Caco-2 (cell line): ENCODE measurements at regions of chr1 and their contacts with region 1.

Region 1: DNA sequence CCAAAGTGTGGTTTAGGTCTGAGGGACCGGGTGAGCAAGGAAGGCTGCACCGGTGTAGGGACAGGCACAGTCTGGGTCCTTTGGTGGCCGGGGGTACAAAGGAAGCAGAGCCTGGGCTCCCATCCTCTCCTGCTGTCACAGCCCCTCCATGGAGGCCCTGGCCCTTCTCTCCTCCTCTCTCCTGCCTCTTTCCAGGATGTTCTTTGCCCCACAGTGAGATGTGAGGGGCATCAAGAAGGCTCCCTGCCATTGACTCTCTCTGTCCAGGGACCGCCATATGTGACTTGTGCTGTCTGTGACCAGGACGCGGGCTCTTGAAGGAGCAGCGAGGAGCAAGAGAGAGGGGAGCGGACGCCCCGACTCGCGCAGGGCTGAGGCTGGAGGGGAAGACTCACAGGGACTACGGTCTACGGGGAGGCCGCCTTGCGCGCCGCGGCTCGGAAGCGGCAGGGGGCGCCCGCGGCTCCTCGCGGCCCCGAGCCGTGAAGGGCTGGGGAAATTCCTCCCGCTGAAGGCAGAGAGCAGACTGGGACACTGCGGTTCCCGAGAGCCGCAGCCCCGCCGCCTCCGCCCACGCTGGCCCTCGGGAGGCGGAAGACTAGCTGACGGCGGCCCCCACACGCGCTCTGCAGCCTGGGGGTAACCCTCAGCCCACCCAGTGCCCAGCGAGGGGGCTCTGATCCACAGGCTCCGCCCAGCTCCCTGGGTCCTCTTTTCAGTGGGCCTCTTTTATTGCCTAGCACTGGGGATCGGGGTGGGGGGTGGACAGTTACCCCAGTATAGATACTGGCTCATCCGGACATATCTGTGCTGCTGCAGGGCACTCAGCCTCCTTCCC is 40.8 kb downstream of the MAB21L3 start:
- DNase-seq: peak; percentile 68 to 80
- H3K4me3 ChIP-seq: peak overlapping the region; percentile 38
- H3K4me3 Mint-ChIP-seq: peak overlapping the region; percentile 66
- H3K27ac Mint-ChIP-seq: peak overlapping the region; percentile 75
- H3K4me1 ChIP-seq: peaks cover 40% of the 10 kb centered on the region
- H3K4me1 Mint-ChIP-seq: peaks cover 9% of the 10 kb centered on the region
- H3K27me3 ChIP-seq: no peaks in the 10 kb centered on the region
- H3K27me3 Mint-ChIP-seq: no peaks in the 10 kb centered on the region
- CTCF ChIP-seq: peak; percentile 46 to 79

Region 2: DNA sequence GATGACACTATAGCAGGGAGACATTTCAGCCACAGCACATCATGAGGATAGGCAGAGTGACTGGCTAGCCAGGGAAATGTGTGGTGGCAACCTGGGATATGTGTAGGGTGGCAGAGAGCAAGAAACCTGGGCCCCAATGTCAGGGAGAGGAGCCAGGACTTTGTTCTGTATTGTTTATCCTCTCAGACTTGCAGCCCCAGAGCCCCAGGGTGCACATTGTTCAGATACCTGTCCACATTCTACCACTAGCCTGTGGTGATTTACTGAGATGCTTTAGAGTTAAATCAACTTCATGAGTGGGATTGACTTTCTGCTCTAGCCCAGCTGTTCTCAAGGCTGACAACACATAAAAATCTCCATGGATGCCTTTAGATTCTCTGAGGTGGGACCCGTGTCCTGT is 20.7 kb after region 1 on chr1:
- CTCF ChIA-PET with region 1: no interaction called
- POLR2A ChIA-PET with region 1: no interaction called
- intact Hi-C with region 1: loop called (anchors 1 kb)
- DNase-seq: peak; percentile 52 to 73
- H3K4me3 ChIP-seq: no peak overlapping the region
- H3K4me3 Mint-ChIP-seq: peak overlapping the region; percentile 27
- H3K27ac Mint-ChIP-seq: no peak overlapping the region
- H3K4me1 ChIP-seq: peaks cover 48% of the 10 kb centered on the region
- H3K4me1 Mint-ChIP-seq: peaks cover 15% of the 10 kb centered on the region
- H3K27me3 ChIP-seq: no peaks in the 10 kb centered on the region
- H3K27me3 Mint-ChIP-seq: no peaks in the 10 kb centered on the region
- CTCF ChIP-seq: no peak

Region 3: DNA sequence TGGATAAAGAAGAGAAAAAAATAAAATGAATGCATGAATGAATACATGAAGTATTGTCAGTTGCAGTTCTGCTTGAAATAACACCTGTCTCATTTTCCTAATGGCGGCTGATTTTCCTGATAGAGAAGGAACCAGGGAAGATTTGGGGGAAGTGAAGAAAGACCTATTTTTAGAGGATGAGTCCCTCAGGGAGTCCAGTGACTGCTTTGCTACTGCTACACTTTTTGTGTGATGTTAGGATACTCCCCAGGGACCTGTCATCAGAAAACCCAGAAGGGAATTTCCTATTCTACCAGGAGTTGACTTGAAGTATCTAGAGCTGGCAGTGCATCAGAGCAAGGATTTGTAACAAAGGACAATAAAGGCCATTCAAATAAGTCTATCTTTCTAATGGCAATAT is 74.1 kb after region 1 on chr1:
- CTCF ChIA-PET with region 1: no interaction called
- POLR2A ChIA-PET with region 1: no interaction called
- intact Hi-C with region 1: loop called (anchors 10 kb)
- DNase-seq: no peak
- H3K4me3 ChIP-seq: no peak overlapping the region
- H3K4me3 Mint-ChIP-seq: no peak overlapping the region
- H3K27ac Mint-ChIP-seq: no peak overlapping the region
- H3K4me1 ChIP-seq: no peaks in the 10 kb centered on the region
- H3K4me1 Mint-ChIP-seq: no peaks in the 10 kb centered on the region
- H3K27me3 ChIP-seq: no peaks in the 10 kb centered on the region
- H3K27me3 Mint-ChIP-seq: no peaks in the 10 kb centered on the region
- CTCF ChIP-seq: no peak

Region 4: GRCh38 chr1:116239620-116240310 is 87.8 kb after region 1 on chr1:
- CTCF ChIA-PET with region 1: no interaction called
- POLR2A ChIA-PET with region 1: no interaction called
- intact Hi-C with region 1: no loop called
- DNase-seq: peak in 1 of 2 experiments; percentile 4
- H3K4me3 ChIP-seq: no peak overlapping the region
- H3K4me3 Mint-ChIP-seq: no peak overlapping the region
- H3K27ac Mint-ChIP-seq: peak overlapping the region; percentile 61
- H3K4me1 ChIP-seq: no peaks in the 10 kb centered on the region
- H3K4me1 Mint-ChIP-seq: peaks cover 8% of the 10 kb centered on the region
- H3K27me3 ChIP-seq: no peaks in the 10 kb centered on the region
- H3K27me3 Mint-ChIP-seq: no peaks in the 10 kb centered on the region
- CTCF ChIP-seq: no peak

Region 5: DNA sequence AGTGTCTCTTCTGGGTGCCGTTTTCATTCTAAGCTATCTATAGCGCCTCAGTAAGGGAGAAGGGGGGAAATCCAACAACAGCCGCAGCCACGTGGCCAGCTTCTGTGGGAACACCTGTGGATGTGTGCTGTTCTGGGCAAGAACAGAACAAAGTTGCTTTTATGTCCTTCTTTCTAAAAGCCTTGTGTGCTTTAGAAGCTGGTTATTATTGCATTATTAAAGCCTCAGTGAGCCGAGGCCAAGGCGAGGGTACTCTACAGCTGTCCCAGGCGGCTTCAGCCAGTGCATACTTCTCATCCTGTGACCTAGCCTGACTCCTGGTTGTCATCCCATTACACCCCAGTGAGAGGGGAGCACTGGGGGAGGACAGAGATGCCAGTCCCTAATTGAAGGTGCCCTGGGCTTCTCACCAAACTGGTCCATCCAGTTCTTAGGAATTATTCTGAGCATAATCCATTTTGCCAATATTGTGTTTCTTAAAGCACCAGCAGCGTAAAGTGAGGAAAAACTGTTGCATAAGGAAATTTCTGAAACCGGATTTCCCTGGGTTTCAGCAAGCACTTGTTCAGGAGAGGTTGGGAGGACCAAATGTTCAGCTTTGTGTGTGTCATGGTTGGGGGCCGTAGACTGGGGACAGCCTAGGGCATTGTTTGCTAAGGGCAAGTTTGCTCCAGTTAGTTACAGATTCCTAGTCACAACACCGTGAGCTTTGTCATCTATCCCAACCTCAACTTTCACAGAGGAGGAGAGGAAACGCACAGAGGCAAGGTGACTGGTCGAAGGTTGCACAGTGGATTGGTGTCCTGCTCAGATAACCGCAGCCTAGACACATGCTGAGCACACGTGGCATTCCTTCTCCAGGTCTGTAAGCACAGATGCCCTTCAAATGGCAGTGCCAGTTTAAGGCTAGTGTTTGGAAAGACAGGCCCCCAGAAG is 160.1 kb after region 1 on chr1:
- CTCF ChIA-PET with region 1: interaction called, 4 read pairs
- POLR2A ChIA-PET with region 1: no interaction called
- intact Hi-C with region 1: loop called (anchors 1 kb)
- DNase-seq: peak; percentile 39 to 53
- H3K4me3 ChIP-seq: no peak overlapping the region
- H3K4me3 Mint-ChIP-seq: no peak overlapping the region
- H3K27ac Mint-ChIP-seq: no peak overlapping the region
- H3K4me1 ChIP-seq: peaks cover 31% of the 10 kb centered on the region
- H3K4me1 Mint-ChIP-seq: peaks cover 15% of the 10 kb centered on the region
- H3K27me3 ChIP-seq: no peaks in the 10 kb centered on the region
- H3K27me3 Mint-ChIP-seq: no peaks in the 10 kb centered on the region
- CTCF ChIP-seq: no peak

Region 6: DNA sequence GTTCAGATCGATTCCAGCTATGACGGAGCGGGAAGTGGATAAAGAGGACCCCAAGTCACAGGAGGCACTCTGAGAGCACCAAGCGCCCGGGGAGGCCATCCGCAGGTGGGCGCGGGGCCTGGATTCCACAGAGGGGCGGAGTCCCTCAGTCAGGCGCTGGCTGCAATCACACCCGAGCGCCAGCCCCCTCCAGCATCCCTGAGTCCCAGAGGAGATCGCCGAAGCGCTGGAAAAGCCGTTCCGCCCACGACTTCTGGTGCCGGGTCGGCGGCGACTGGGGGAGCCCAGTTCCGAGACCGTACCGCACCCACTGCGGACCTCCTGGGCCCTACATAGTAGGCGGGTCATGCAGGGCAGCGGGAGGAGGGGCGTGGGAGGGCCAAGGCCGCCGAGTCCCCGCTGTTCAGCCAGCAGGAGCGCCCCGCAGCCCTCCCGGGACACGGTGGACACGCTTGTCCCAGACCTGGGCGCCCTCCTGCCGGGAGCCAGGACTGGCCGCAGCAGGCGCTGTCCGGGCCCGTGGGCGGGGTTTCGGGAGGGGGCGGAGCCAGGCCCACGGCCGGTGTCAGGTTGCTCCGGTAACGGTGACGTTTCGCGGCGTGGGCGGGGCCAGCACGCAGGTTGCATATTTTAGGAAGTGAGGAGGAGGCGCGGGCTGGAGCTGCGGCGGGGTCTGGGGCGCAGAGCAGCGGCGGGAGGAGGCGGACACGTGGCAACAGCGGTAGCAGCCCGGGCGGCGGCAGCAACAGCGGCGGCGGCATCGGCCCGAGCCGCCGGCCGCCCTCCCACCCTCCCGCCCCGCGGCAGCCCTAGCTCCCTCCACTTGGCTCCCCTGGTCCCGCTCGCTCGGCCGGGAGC is 220.9 kb after region 1 on chr1 and contains the start of gene ATP1A1:
- CTCF ChIA-PET with region 1: interaction called, 3 read pairs
- POLR2A ChIA-PET with region 1: interaction called, 4 read pairs
- intact Hi-C with region 1: loop called (anchors 2 kb)
- DNase-seq: peak; percentile 95 to 97
- H3K4me3 ChIP-seq: peak within 1 kb of the TSS; percentile 86
- H3K4me3 Mint-ChIP-seq: peak within 1 kb of the TSS; percentile 89
- H3K27ac Mint-ChIP-seq: peak within 1 kb of the TSS; percentile 91
- H3K4me1 ChIP-seq: peaks cover 23% of the 10 kb centered on the region
- H3K4me1 Mint-ChIP-seq: peaks cover 15% of the 10 kb centered on the region
- H3K27me3 ChIP-seq: no peaks in the 10 kb centered on the region
- H3K27me3 Mint-ChIP-seq: no peaks in the 10 kb centered on the region
- CTCF ChIP-seq: no peak
- total RNA-seq, gene ATP1A1: 479 and 508 TPM in 2 replicates

Region 7: DNA sequence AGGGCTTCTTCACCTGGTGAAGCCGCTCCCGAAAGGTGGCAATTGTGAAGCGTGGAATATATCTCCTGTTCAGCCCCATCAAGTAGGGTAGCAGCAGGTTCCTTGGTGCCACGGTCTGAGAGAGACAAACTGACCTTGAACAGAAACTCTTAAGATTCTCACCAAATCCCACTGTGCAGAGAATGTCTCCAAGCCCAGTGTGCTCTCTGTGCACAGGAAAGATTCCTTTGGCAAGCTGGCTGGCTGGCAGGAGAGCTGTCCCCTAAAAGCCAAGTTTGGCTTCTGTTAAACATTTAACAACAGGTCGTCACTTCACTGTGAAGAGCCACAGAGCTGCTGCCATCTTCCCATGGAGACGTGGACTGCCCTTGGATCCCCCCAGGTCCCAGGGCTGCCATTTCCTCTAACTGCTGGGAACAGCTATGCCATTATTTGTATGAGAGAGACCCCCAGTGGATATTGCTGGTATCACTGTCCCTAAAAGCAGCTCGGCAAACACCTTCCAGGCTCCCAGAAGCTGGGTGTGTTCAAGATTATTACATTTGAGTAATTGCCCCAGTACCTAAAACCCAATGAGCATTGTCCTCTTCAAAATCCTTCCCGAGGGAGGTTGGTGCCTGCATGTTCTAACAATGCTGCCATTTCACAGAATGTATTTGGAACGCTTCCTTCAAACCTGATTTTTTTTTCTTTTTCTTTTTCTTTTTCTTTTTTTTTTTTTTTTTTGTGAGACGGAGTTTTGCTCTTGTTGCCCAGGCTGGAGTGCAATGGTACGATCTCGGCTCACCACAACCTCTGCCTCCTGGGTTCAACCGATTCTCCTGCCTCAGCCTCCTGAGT is 347.1 kb after region 1 on chr1:
- CTCF ChIA-PET with region 1: interaction called, 5 read pairs
- POLR2A ChIA-PET with region 1: no interaction called
- intact Hi-C with region 1: loop called (anchors 5 kb)
- DNase-seq: peak; percentile 63 to 73
- H3K4me3 ChIP-seq: no peak overlapping the region
- H3K4me3 Mint-ChIP-seq: no peak overlapping the region
- H3K27ac Mint-ChIP-seq: no peak overlapping the region
- H3K4me1 ChIP-seq: peaks cover 17% of the 10 kb centered on the region
- H3K4me1 Mint-ChIP-seq: peaks cover 20% of the 10 kb centered on the region
- H3K27me3 ChIP-seq: no peaks in the 10 kb centered on the region
- H3K27me3 Mint-ChIP-seq: no peaks in the 10 kb centered on the region
- CTCF ChIP-seq: peak; percentile 65 to 69